ENCODE measurements at regions of chr7 and their contacts with region 1.

Region 1: GRCh38 chr7:157502701-157503111 is 165.9 kb downstream of the DNAJB6 start:
- DNase-seq: peak; percentile 81
- H3K4me3 Mint-ChIP-seq: peak overlapping the region; percentile 63
- H3K27ac Mint-ChIP-seq: peak overlapping the region; percentile 70
- H3K4me1 Mint-ChIP-seq: peaks cover 28% of the 10 kb centered on the region
- H3K27me3 Mint-ChIP-seq: no peaks in the 10 kb centered on the region

Region 2: GRCh38 chr7:156039971-156040677 is 1462.6 kb before region 1 on chr7:
- CTCF ChIA-PET with region 1: no interaction called
- intact Hi-C with region 1: no loop called
- DNase-seq: peak; percentile 48
- H3K4me3 Mint-ChIP-seq: no peak overlapping the region
- H3K27ac Mint-ChIP-seq: no peak overlapping the region
- H3K4me1 Mint-ChIP-seq: no peaks in the 10 kb centered on the region
- H3K27me3 Mint-ChIP-seq: no peaks in the 10 kb centered on the region

Region 3: GRCh38 chr7:157474689-157475088 is 28.0 kb before region 1 on chr7:
- CTCF ChIA-PET with region 1: interaction called, 6 read pairs
- intact Hi-C with region 1: loop called (anchors 1 kb)
- DNase-seq: no peak
- H3K4me3 Mint-ChIP-seq: no peak overlapping the region
- H3K27ac Mint-ChIP-seq: no peak overlapping the region
- H3K4me1 Mint-ChIP-seq: peaks cover 52% of the 10 kb centered on the region
- H3K27me3 Mint-ChIP-seq: no peaks in the 10 kb centered on the region

Region 4: DNA sequence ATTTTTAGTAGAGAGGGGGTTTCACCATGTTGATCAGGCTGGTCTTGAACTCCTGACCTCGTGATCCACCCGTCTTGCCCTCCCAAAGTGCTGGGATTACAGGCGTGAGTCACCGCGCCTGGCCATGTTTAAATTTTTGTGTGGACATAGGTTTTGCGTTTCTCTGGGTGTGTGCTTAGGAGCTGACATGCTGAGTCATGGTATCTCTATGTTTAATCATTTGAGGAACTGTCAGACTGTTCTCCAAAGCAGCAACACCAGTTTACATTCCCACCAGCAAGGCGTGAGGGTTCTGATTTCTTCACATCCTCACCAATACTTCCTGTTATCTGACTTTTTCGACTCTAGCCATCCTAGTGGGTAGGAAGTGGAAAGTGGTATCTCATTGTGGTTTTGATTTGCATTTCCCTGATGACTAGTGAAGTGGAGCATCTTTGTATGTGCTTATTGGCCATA is 12.2 kb before region 1 on chr7:
- CTCF ChIA-PET with region 1: interaction called, 3 read pairs
- intact Hi-C with region 1: loop called (anchors 1 kb)
- DNase-seq: peak; percentile 63
- H3K4me3 Mint-ChIP-seq: no peak overlapping the region
- H3K27ac Mint-ChIP-seq: peak overlapping the region; percentile 36
- H3K4me1 Mint-ChIP-seq: peaks cover 30% of the 10 kb centered on the region
- H3K27me3 Mint-ChIP-seq: peaks cover 8% of the 10 kb centered on the region

Region 5: DNA sequence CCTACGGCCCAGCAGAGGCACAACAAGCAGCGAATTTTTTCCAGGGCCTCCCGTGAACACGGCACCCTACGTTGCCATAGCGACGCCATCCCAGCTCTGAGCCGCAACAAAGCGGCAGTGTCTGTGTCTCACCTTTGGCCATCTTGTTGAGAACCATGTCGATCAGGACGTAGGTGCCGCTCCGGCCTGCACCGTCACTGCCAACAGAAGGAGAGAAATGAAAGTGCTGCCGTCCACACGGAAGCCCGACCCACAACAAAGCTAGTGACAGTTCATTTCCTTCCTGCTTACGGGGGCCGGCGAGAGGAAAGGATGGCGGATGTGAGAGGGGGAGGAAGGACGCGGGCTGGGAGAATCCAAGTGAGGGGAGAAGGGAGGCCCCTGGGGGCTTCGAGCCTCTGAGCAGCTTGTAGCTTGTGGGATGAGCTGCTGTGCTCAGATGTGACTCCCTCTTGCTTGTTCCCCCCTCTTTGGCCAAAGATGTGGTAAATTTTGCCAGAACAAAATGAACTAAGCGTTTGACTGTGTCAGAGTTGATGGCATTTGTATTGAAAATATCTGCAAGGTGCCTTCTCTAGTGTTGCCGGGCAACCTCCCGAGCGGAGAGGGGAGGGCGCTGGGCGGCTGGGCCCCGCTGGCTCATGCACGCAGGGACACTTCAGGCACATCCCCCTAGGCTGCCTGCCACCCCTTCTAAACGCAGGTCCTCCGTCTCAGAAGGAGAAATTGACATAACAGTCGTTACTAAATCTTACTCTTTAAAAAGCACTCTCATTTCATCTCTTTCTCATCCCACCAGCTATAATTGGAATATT is 66.3 kb after region 1 on chr7:
- CTCF ChIA-PET with region 1: no interaction called
- intact Hi-C with region 1: loop called (anchors 2 kb)
- DNase-seq: peak; percentile 76
- H3K4me3 Mint-ChIP-seq: peak overlapping the region; percentile 84
- H3K27ac Mint-ChIP-seq: peak overlapping the region; percentile 57
- H3K4me1 Mint-ChIP-seq: peaks cover 20% of the 10 kb centered on the region
- H3K27me3 Mint-ChIP-seq: no peaks in the 10 kb centered on the region

Region 6: DNA sequence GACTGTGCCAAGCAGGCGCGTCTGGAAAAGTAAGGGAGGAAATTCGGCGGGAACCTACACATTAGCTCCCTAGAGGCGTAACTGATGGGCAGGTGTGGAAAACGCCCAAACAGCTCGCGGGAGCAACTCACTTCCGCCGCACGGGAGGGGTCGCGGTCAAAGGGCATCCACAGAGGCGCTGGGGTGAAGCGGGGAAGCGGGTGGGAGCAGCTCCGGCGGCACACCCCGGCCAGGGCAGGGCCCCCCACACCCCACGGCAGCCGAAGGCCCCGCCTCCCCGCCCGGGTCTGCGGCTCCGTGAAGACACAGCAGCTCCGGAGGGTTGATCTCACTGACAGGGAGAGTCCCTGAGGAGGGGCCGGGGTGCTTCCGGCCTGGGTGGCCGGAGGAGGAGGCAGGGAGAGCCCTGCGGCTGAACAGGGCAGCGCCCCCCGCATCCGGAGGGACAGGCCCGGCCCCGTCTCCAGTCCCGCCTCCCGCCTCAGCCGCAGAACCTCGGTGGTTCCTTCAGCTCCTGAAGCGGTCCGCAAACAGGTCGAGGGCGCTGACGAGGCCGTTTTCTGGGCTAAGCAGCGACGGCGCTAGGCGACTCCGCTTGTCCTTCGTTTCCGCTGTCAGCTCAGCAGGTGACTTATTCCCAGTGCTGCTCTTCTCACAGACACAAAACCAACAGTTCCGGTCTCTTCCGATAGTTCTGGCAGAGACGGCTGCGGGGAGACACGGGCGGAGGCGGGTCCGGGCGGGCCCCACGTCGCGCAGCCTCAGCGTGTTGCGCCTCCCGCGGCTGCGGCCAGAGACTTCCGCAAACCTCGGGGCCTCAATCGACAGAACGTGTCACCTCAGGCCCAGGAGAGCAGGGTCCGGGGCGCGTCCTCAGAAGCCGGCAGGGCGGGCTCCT is 110.2 kb after region 1 on chr7:
- CTCF ChIA-PET with region 1: no interaction called
- intact Hi-C with region 1: loop called (anchors 2 kb)
- DNase-seq: peak; percentile 77
- H3K4me3 Mint-ChIP-seq: peak overlapping the region; percentile 77
- H3K27ac Mint-ChIP-seq: peak overlapping the region; percentile 46
- H3K4me1 Mint-ChIP-seq: peaks cover 10% of the 10 kb centered on the region
- H3K27me3 Mint-ChIP-seq: no peaks in the 10 kb centered on the region

Region 7: DNA sequence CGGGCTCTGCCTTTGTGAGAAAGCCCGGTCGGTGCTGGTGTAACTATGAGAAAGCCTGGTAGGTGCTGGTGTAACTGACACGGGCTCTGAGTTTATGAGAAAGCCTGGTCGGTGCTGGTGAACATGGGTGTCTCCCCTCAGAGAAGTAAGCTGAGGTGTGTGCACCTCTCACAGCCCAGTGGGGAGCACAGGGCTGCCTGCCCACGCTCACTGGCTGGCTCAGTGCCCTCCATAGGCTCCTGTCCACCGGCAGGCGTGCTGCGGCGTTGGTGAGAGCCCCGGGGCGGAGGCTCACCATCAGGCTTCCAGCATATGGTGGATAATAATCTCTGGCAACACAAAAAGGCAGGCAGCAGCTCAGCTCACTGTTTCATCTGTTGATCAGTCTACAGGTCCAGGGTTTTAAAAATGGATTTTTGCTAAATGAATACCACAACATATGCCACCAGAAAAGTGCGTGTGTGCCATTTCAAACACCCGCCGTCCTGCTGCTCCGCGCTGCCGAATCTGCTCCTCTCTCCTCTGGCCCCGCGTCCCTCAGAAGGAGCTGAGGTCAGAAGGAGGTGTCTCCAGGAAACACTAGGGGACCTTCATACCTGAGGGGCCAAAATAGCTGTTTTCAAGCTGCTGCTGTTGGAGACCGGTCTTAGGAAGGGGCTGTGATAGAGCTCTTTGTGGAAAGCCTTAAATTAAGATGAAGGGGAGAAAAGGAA is 199.8 kb after region 1 on chr7:
- CTCF ChIA-PET with region 1: no interaction called
- intact Hi-C with region 1: no loop called
- DNase-seq: no peak
- H3K4me3 Mint-ChIP-seq: no peak overlapping the region
- H3K27ac Mint-ChIP-seq: no peak overlapping the region
- H3K4me1 Mint-ChIP-seq: no peaks in the 10 kb centered on the region
- H3K27me3 Mint-ChIP-seq: peaks cover 41% of the 10 kb centered on the region

Region 8: GRCh38 chr7:157827045-157827862 is 324.5 kb after region 1 on chr7:
- CTCF ChIA-PET with region 1: no interaction called
- intact Hi-C with region 1: loop called (anchors 5 kb)
- DNase-seq: peak; percentile 63
- H3K4me3 Mint-ChIP-seq: no peak overlapping the region
- H3K27ac Mint-ChIP-seq: peak overlapping the region; percentile 39
- H3K4me1 Mint-ChIP-seq: peaks cover 31% of the 10 kb centered on the region
- H3K27me3 Mint-ChIP-seq: no peaks in the 10 kb centered on the region

Region 9: GRCh38 chr7:157875230-157876179 is 372.8 kb after region 1 on chr7:
- CTCF ChIA-PET with region 1: no interaction called
- intact Hi-C with region 1: loop called (anchors 10 kb)
- DNase-seq: peak; percentile 68
- H3K4me3 Mint-ChIP-seq: peak overlapping the region; percentile 60
- H3K27ac Mint-ChIP-seq: peak overlapping the region; percentile 21
- H3K4me1 Mint-ChIP-seq: peaks cover 41% of the 10 kb centered on the region
- H3K27me3 Mint-ChIP-seq: no peaks in the 10 kb centered on the region

Measured in activated naive CD4-positive, alpha-beta T cell treated with anti-CD3 and anti-CD28 coated beads for 36 hours (primary cell).